H1 (cell line): ENCODE measurements at regions of chr3 and their contacts with region 1.

Region 1: DNA sequence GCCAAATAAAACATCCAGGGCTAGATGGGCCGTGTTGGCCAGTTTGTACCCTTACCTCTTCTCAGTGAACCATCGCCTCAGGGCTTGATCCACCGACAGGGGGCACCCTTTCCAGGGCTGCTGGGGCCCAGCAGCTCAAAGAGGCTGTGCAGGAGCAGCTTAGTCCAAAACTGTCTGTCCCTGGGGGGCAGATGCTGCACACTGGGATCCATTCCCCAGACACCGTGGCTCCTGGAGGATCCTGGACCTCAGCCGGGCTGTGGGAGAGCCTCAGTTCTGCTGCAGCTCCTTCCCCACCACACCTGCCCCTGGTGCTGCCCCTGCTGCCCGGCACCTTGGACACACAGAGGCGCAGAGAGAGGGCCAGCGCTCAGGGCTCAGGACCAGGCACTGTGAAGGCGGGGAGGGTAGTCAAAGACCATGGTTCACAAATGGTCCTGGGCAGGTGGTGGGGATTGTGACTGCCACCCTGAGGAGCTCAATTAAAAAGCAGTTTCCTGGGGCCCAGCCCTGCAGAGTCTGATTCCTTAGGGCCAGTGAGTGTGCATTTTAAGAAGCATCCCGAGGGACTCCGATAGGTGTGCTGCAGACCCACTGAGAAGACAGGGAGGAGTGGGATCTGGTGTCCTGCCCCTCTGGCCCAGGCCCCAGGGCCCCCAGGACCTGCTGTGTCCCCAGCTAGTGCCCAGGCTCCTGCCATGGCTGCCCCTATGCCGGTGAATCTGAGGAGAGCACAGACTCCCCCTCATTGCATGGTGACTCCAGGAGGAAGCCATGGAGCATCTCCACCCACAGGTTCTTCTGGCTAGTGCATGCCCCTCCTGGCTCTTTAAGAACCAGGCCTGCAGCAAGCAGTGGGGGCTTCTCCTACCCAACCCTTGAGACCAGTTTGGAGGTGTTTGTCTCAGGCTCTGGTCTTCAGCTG is 86.5 kb upstream of the PRR20G start:
- DNase-seq: peak in 1 of 2 experiments; percentile 85
- H3K4me3 ChIP-seq: no peak overlapping the region
- H3K27ac ChIP-seq: no peak overlapping the region
- H3K4me1 ChIP-seq: 0 out of 7 replicates have a peak, but pooled peaks cover 0 to 4% (median 0%) of the 10 kb centered on the region in 4 experiments
- H3K27me3 ChIP-seq: no peaks in the 10 kb centered on the region
- CTCF ChIP-seq: peak; percentile 73 to 81 (median 78)
- EP300 ChIP-seq: no peak
- POLR2A ChIP-seq: no peak
- RAD21 ChIP-seq: peak; percentile 59 to 75

Region 2: DNA sequence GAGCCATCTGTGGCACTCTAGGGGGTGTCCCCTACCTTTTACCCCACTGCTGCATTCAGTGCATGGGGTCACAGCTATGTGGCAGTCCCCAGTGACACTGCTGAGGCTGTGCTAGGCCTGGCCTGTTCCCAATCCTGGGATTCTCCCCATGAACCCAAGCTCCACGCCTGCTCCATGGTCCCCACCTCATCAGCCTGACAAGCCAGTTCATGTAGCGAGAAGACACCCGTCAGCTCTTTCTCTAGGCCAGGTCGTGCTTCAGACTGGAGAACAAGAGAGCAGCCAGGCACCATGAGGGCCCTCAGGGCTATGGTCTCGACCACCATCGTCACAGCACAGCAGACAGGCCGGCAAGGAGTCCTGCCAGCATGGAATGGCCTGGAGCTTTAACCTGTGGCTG is 13.7 kb before region 1 on chr3:
- CTCF ChIA-PET with region 1: interaction called, 25 read pairs
- POLR2A ChIA-PET with region 1: no interaction called
- DNase-seq: no peak
- H3K4me3 ChIP-seq: no peak overlapping the region
- H3K27ac ChIP-seq: no peak overlapping the region
- H3K4me1 ChIP-seq: no peaks in the 10 kb centered on the region
- H3K27me3 ChIP-seq: no peaks in the 10 kb centered on the region; a peak in 1 of 7 replicates
- CTCF ChIP-seq: no peak
- EP300 ChIP-seq: no peak
- POLR2A ChIP-seq: no peak
- RAD21 ChIP-seq: no peak

Region 3: GRCh38 chr3:127395663-127396355 is 21.5 kb after region 1 on chr3:
- CTCF ChIA-PET with region 1: interaction called, 43 read pairs
- POLR2A ChIA-PET with region 1: interaction called, 3 read pairs
- DNase-seq: no peak
- H3K4me3 ChIP-seq: peak overlapping the region in 2 of 4 experiments; percentile 5 to 40; a peak in 2 of 8 replicates
- H3K27ac ChIP-seq: no peak overlapping the region
- H3K4me1 ChIP-seq: peaks cover 6 to 19% (median 14%) of the 10 kb centered on the region in 4 experiments
- H3K27me3 ChIP-seq: no peaks in the 10 kb centered on the region; a peak in 1 of 7 replicates
- CTCF ChIP-seq: no peak
- EP300 ChIP-seq: no peak
- POLR2A ChIP-seq: no peak
- RAD21 ChIP-seq: no peak

Region 4: DNA sequence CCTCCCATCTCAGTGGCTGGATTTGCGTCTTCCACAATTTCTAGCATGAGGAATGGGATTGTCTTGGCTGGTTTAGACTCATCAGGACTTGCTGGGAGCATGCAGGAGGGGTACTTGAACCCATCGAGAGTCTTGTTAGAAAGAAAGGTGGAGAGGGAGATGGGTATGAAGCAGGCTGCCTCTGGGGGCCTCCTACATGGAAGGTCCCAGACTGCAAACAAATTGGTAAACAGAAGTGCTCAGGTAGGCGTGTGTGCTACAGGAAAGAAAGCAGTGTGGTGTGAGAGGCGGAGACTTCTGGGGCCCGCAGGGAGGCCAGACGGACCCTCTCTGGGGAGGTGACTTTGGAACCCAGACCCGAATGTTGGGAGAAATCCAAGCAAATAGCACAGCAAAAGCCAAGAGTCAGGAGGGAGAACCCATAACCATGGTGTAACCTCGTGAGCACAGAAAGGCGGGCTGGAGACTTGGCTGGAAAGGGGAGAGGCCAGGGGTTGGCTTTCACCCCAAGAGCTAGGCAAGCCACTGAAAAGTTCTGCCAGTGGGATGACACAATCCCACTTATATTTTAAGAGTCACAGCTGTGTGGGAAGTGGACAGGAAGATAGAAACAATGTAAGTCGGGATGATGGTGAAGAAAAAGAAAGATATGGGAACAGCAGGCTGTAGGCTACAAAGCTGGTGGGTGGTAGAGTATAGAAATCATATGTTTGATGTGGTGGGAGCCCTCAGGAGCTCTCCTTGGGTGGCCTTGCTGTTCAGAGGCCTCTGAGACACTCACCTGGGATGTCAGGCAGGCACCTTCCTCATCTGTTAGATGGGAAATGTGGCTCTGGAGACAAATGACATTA is 43.6 kb after region 1 on chr3:
- CTCF ChIA-PET with region 1: interaction called, 13 read pairs
- POLR2A ChIA-PET with region 1: no interaction called
- DNase-seq: peak in 1 of 2 experiments; percentile 31
- H3K4me3 ChIP-seq: no peak overlapping the region
- H3K27ac ChIP-seq: no peak overlapping the region
- H3K4me1 ChIP-seq: peaks cover 0 to 13% (median 7%) of the 10 kb centered on the region in 4 experiments; a peak in 4 of 7 replicates
- H3K27me3 ChIP-seq: no peaks in the 10 kb centered on the region
- CTCF ChIP-seq: no peak
- EP300 ChIP-seq: no peak
- POLR2A ChIP-seq: no peak
- RAD21 ChIP-seq: no peak

Region 5: DNA sequence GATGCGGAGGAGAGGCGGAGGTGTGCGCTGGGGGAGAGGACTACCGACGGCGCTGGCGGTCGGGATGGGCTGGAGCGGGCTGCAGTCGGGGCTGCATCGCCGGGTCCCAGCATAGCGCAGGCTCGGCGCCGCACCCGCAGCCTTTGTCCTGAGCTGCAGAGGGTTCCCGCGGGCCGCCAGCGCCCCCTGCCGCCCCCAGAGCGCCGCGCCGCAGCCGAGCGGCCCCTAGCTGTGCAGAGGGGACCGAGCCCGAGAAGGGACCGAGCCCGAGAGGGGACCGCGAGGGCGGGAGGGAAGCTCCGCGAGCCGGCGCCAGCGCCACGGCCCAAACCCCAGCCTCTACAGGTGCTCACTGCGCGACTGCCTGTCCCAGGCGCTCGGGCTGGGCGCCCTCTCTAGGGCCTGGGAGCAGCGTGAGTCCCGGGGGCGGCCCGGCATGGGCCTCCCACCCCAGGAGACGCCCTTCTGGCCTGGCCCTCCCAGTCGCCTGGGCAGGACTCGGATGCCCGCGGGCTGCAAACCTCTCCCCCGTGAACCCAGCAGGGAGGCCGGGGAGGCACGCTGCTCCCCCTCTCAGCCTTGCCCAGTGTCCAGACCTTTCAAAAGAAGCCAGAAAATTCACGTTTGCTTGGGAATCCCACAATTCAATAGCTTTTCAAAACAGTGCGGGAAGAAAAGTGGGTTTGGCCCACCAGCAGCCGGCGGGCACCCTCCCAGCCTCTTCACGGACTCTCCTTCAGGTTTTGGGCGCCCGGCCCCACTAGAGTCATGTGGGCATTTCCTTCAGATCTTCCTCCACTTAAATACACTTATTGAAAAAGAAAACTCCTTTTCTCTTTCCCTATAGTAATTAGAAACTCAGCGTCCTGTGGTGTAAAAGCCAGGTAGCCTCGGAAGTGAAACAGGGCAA is 81.4 kb after region 1 on chr3:
- CTCF ChIA-PET with region 1: interaction called, 10 read pairs
- POLR2A ChIA-PET with region 1: no interaction called
- DNase-seq: peak; percentile 77 to 97
- H3K4me3 ChIP-seq: peak overlapping the region; percentile 29 to 67 (median 49)
- H3K27ac ChIP-seq: no peak overlapping the region
- H3K4me1 ChIP-seq: peaks cover 2 to 15% (median 8%) of the 10 kb centered on the region in 4 experiments; a peak in 5 of 7 replicates
- H3K27me3 ChIP-seq: peaks cover 19 to 41% (median 34%) of the 10 kb centered on the region in 4 experiments
- CTCF ChIP-seq: peak in 2 of 3 experiments; percentile 80 to 98; a peak in 3 of 4 replicates
- EP300 ChIP-seq: peak in 1 of 2 experiments; percentile 65; a peak in 1 of 3 replicates
- POLR2A ChIP-seq: no peak
- RAD21 ChIP-seq: peak; percentile 93 to 94